ENCODE measurements at regions of chr5 and their contacts with region 1.

Region 1: DNA sequence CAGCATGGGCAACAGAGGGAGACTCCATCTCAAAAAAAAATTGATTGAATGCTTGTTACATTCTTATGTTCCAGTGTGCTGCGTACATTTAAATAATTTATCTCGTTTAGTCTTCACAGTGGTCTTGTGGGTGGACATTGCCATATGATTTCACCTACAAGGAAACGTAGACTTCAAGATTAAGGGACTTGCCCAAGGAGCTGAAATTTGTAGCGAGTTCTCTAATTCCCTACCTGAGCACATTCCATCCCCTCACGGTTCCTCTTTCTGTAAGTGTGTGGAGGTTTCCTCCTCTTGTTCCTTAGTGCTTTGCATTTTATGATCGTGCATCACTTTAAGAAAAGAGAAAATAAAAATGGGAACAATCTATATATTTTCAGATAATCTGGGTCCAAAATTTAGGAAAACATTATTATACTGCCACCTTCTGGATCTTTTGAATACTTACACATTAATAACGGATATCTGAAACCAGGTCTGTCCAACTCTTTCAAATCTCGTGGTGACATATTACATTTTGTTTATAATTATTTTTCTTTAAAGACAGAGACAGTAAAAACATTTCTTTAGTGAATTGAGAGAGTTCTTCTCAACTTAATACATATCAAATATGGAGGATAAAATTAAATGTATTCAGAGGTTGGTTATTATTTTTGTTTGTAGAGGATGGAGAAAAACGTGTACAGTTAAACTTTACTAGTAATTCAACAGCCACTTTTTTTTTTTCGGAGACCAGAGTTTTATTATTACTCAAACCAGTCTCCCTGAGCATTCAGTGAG is 29.9 kb upstream of the C7 start:
- DNase-seq: peak; percentile 57
- H3K4me3 ChIP-seq: no peak overlapping the region
- H3K27ac ChIP-seq: no peak overlapping the region
- H3K4me1 ChIP-seq: no peaks in the 10 kb centered on the region
- H3K27me3 ChIP-seq: no peaks in the 10 kb centered on the region
- CTCF ChIP-seq: peak; percentile 66; the same call in 1 of the 2 replicates

Region 2: GRCh38 chr5:39714036-39714698 is 1165.2 kb before region 1 on chr5:
- CTCF ChIA-PET with region 1: no interaction called
- POLR2A ChIA-PET with region 1: no interaction called
- intact Hi-C with region 1: loop called (anchors 10 kb)
- DNase-seq: peak; percentile 60
- H3K4me3 ChIP-seq: no peak overlapping the region
- H3K27ac ChIP-seq: no peak overlapping the region
- H3K4me1 ChIP-seq: peaks cover 3% of the 10 kb centered on the region
- H3K27me3 ChIP-seq: no peaks in the 10 kb centered on the region
- CTCF ChIP-seq: peak; percentile 66

Region 3: GRCh38 chr5:40694433-40694832 is 184.9 kb before region 1 on chr5:
- CTCF ChIA-PET with region 1: no interaction called
- POLR2A ChIA-PET with region 1: no interaction called
- intact Hi-C with region 1: loop called (anchors 5 kb)
- DNase-seq: no peak
- H3K4me3 ChIP-seq: no peak overlapping the region
- H3K27ac ChIP-seq: no peak overlapping the region
- H3K4me1 ChIP-seq: no peaks in the 10 kb centered on the region
- H3K27me3 ChIP-seq: no peaks in the 10 kb centered on the region
- CTCF ChIP-seq: no peak

Region 4: GRCh38 chr5:40755407-40756365 is 123.7 kb before region 1 on chr5 and contains the start of gene TTC33:
- CTCF ChIA-PET with region 1: no interaction called
- POLR2A ChIA-PET with region 1: no interaction called
- intact Hi-C with region 1: loop called (anchors 1 kb)
- DNase-seq: peak; percentile 97
- H3K4me3 ChIP-seq: peak within 1 kb of the TSS; percentile 93
- H3K27ac ChIP-seq: peak within 1 kb of the TSS; percentile 90
- H3K4me1 ChIP-seq: peaks cover 10% of the 10 kb centered on the region
- H3K27me3 ChIP-seq: no peaks in the 10 kb centered on the region
- CTCF ChIP-seq: peak; percentile 87
- total RNA-seq, gene TTC33: 17.0 and 19.1 TPM in 2 replicates

Region 5: DNA sequence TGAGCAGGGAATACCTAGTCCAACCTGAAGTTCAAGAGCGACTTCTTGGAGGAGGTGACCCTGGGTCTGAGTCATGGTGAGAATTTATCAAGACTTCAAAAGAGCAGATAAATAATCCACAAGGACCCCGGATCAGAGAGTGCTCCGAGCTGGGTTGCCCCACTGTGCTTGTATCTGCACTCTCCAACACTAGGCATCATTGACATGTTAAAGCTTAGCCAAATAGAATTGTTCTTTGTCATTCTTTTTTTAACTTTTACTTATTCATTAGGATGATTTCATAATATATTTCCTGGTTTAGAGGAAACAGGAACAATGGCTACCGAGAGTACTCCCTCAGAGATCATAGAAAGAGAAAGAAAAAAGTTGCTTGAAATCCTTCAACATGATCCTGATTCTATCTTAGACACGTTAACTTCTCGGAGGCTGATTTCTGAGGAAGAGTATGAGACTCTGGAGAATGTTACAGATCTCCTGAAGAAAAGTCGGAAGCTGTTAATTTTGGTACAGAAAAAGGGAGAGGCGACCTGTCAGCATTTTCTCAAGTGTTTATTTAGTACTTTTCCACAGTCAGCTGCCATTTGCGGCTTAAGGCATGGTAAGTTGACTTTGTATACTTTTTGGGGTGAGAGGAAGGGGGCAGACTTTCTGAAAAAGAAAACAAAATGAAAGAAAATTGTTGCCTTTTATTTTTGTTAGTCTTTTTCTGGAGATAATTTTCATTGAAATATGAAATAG is 38.1 kb before region 1 on chr5 and contains the start of gene CARD6:
- CTCF ChIA-PET with region 1: no interaction called
- POLR2A ChIA-PET with region 1: no interaction called
- intact Hi-C with region 1: loop called (anchors 5 kb)
- DNase-seq: peak; percentile 74
- H3K4me3 ChIP-seq: peak within 1 kb of the TSS; percentile 44
- H3K27ac ChIP-seq: peak within 1 kb of the TSS; percentile 80
- H3K4me1 ChIP-seq: peaks cover 4% of the 10 kb centered on the region
- H3K27me3 ChIP-seq: no peaks in the 10 kb centered on the region
- CTCF ChIP-seq: peak; percentile 40
- total RNA-seq, gene CARD6: 7.1 and 8.9 TPM in 2 replicates

Region 6: DNA sequence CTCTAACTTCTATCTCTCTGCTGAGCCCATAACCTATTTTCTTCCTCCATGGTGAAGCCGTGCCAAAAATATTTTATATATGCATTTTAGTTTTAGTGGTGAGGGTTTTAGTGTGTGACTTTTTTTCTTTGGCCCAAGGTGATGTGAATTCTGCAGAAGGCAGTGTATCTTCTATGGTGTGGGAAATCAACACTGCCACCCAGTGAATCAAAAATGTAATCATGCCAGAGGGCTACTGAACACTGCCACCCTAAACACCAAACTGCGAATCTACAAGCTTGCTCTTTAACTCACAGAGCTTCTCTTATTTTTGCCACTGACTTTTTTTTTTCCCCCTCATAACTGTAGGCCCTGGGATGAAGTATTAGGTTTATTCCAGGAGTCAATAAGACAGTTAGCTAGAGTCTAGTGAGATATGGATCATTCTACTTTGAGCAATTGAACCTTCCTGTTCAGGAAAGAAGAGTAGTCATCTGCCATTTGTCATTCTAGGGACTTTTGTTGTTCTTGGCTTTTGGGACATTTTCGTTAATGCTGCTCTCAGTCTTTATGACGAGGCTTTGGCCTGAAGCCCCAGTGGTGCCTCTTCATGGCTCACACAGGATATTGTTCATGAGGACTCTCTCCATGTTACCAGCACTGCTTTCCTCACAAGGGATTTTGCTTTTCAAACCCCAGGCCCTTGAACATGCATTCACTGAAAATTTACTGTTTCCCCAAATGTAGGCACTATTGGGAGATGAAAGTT is 83.0 kb after region 1 on chr5:
- CTCF ChIA-PET with region 1: no interaction called
- POLR2A ChIA-PET with region 1: no interaction called
- intact Hi-C with region 1: no loop called
- DNase-seq: no peak
- H3K4me3 ChIP-seq: no peak overlapping the region
- H3K27ac ChIP-seq: no peak overlapping the region
- H3K4me1 ChIP-seq: no peaks in the 10 kb centered on the region
- H3K27me3 ChIP-seq: no peaks in the 10 kb centered on the region
- CTCF ChIP-seq: peak; percentile 39

Measured in A673 (cell line).